ENCODE measurements at regions of chr7 and their contacts with region 1.

Region 1: DNA sequence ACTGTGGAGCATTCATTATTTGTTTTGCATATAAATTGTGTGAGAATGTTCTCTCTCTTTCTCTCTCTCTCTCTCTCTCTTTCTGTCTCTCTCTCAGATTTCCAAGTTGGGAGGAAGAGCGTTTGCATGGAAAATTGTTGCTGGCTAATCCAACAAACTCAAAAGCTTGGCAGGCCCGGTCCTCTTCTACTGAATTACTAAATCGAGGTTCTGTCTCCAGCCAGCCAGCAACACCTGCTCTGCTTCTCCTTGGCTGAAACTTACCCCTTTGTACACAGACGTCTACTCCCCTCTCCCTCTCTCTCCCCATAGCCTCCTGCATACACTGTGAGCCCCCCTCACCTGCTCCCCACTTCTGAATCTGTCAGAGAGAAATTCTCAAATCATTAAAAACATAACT is 996.4 kb upstream of the AUTS2 start:
- DNase-seq: no peak
- ATAC-seq: peak; percentile 38

Region 2: GRCh38 chr7:68576366-68576765 is 25.5 kb before region 1 on chr7:
- intact Hi-C with region 1: loop called (anchors 2 kb)
- DNase-seq: no peak
- ATAC-seq: no peak